A549 (cell line): ENCODE measurements at regions of chr17 and their contacts with region 1.

Region 1: GRCh38 chr17:76353599-76354316 is at the start of gene PRPSAP1:
- DNase-seq: peak; percentile 95 to 98
- ATAC-seq: peak; percentile 97 to 98
- H3K4me3 ChIP-seq: peak within 1 kb of the TSS; percentile 83
- H3K27ac ChIP-seq: peak within 1 kb of the TSS; percentile 93 to 97
- H3K4me1 ChIP-seq: peaks cover 18% of the 10 kb centered on the region; the same call in 2 of the 3 replicates
- CTCF ChIP-seq: no peak
- EP300 ChIP-seq: no peak; a peak in 1 of 5 replicates
- POLR2A ChIP-seq: peak; percentile 98
- RAD21 ChIP-seq: no peak
- polyA plus RNA-seq, gene PRPSAP1: 80.9 and 92.1 TPM in 2 replicates

Region 2: GRCh38 chr17:76365256-76365903 is 11.6 kb after region 1 on chr17:
- CTCF ChIA-PET with region 1: interaction called, 41 read pairs
- POLR2A ChIA-PET with region 1: interaction called, 10 read pairs
- DNase-seq: no peak
- ATAC-seq: peak; percentile 48 to 79; a peak in 3 of 6 replicates
- H3K4me3 ChIP-seq: no peak overlapping the region
- H3K27ac ChIP-seq: no peak overlapping the region
- H3K4me1 ChIP-seq: no peaks in the 10 kb centered on the region
- CTCF ChIP-seq: peak; percentile 58
- EP300 ChIP-seq: no peak
- POLR2A ChIP-seq: no peak
- RAD21 ChIP-seq: peak in 1 of 2 experiments; percentile 58; a peak in 2 of 5 replicates

Region 3: DNA sequence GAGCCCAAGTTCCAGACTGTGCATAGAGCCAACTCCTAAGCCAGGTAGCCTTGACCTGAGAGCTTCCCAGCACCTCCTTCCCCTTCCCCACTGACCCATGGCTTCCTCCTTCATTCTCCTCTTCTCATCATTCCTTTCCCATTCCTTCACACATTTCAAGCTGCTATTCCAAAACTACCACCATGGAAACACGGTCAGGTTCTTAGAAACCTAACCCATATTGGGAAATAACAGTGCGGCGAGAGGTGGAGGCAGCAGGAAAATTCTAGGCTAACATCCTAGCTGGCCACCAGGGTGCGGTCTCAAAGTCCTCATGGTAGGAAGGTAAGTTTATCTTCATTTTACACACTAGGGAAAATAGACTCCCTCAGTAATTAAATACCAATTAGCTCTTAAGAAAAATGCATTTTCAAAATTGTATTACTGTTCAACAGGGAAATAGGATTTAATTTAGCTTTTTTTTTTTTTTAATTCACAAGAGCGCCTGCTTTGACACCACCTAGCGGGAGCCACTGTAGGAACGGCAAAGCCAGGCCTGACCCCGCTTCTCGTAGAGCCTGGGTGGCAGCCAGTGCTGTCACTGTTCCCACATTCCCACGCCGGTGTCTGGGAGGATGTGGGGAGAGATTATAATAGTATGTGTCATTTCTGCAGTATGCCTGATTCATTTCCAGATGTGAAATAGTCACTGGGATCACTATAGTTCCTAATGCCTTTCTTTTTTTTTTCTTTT is 16.7 kb after region 1 on chr17:
- CTCF ChIA-PET with region 1: interaction called, 899 read pairs
- POLR2A ChIA-PET with region 1: interaction called, 10 read pairs
- DNase-seq: peak; percentile 62 to 79
- ATAC-seq: peak; percentile 79 to 83
- H3K4me3 ChIP-seq: no peak overlapping the region
- H3K27ac ChIP-seq: no peak overlapping the region
- H3K4me1 ChIP-seq: peaks cover 6% of the 10 kb centered on the region; the same call in 2 of the 3 replicates
- CTCF ChIP-seq: peak; percentile 92
- EP300 ChIP-seq: no peak
- POLR2A ChIP-seq: no peak
- RAD21 ChIP-seq: peak; percentile 24 to 27; a peak in 2 of 5 replicates